Mucosa of descending colon (tissue), 3 donors: ENCODE measurements at regions of chr1 and their contacts with region 1.

Region 1: DNA sequence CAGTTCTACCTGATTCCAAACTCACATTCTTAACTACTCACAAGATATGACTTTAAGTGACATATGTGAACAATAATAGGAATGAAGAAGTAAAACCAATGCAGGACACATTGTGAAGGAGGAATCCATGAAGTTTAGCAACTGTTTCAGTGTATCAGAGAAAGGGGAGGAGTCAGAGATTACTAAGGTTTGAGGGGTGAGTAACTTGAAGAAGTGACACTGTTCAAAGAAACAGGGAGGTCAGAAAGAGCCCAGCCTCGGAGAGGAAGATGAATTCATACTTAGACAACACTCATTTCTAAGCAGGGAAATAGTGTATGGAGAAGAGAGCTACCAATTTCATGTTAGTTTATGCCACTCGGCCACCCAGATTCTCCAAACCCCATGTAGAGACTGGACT is 28.2 kb upstream of the RPF1 start:
- DNase-seq: no peak
- ATAC-seq: no peak
- H3K4me3 ChIP-seq: no peak overlapping the region
- H3K4me1 ChIP-seq: no peaks in the 10 kb centered on the region
- CTCF ChIP-seq: no peak

Region 2: GRCh38 chr1:84377480-84378095 is 73.3 kb before region 1 on chr1:
- intact Hi-C with region 1: no loop called
- DNase-seq: no peak
- ATAC-seq: no peak
- H3K4me3 ChIP-seq: no peak overlapping the region
- H3K4me1 ChIP-seq: no peaks in the 10 kb centered on the region
- CTCF ChIP-seq: no peak

Region 3: DNA sequence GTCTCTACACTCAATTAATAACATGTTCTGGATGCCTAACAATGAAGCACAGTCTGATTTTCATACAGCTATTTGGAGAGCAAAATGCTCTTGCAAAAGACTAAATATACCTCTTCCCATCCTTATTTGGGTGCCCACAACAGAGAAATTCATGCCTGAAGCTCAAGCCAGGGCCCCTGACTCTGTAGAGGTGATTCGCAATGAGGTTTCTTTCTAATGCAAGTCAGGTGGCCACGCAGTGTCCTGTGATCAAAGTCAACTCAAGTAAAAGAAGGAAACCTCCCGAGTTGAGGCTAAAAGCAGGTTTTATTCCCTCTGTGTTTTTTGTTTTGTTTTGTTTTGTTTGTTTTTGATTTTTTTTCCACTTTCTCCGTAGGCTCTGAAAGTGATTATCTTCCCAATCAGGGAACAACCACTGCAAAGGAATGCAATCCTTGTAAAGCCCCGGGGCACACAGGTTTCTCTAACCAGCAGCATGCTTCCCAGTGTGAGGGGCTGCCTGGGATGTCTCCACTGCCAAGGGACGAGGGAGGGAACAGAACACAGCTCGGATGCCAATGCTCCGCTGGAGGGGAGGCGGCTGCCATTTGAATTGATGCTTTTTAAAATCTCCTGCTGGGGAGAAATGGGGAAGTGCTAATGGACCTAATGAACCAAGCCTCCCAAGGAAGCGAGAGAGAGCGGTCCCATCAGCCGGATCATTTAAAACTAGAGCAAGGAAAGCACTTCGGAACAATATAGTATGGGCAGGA is 313.2 kb after region 1 on chr1:
- intact Hi-C with region 1: loop called in 1 of 2 experiments (anchors 10 kb)
- DNase-seq: no peak
- ATAC-seq: no peak
- H3K4me3 ChIP-seq: no peak overlapping the region
- H3K4me1 ChIP-seq: no peaks in the 10 kb centered on the region
- CTCF ChIP-seq: no peak

Region 4: DNA sequence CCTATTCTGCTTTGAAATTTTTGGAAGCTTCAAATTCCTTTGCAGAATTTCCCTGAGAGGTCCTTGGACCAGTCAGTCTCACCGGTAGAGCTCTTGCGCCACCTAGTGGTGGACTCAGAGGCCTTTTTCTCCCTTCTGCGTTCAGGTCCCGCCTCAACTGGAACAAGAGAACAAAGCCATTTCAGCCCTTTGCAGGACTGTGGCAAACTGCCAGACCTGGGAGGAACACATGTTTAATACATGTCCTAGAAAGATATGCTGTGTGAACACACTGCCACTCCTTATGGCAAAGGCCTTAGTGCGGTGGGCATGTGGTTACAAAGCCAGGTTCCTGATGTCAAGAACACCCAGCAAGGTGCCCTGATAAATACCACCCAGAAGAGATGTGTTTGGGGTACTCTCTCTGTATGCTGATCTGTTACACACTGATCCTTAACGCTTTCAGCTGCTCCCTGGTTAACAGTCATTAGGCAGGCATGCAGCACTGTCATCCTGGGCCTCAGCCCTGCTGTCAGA is 321.6 kb after region 1 on chr1:
- intact Hi-C with region 1: loop called (anchors 10 kb)
- DNase-seq: peak; percentile 57 to 91 (median 78)
- ATAC-seq: peak; percentile 91
- H3K4me3 ChIP-seq: no peak overlapping the region
- H3K4me1 ChIP-seq: peaks cover 3% of the 10 kb centered on the region
- CTCF ChIP-seq: peak; percentile 87